Activated CD8-positive, alpha-beta T cell treated with anti-CD3 and anti-CD28 coated beads, Interleukin-2, amount 10 ng/mL, durations not matched to agents 7 days and 5 days (primary cell): ENCODE measurements at regions of chr1 and their contacts with region 1.

Region 1: GRCh38 chr1:46247436-46248121 is at the start of gene RAD54L:
- DNase-seq: peak; percentile 98
- ATAC-seq: peak; percentile 93
- H3K4me3 Mint-ChIP-seq: peak within 1 kb of the TSS; percentile 93
- H3K27ac Mint-ChIP-seq: peak within 1 kb of the TSS; percentile 98
- H3K4me1 Mint-ChIP-seq: peaks cover 45% of the 10 kb centered on the region
- H3K27me3 Mint-ChIP-seq: peaks cover 2% of the 10 kb centered on the region
- total RNA-seq, gene RAD54L: 59.3 to 63.9 TPM

Region 2: GRCh38 chr1:46188295-46189030 is 59.1 kb before region 1 on chr1:
- CTCF ChIA-PET with region 1: no interaction called
- POLR2A ChIA-PET with region 1: no interaction called
- DNase-seq: no peak
- ATAC-seq: no peak
- H3K4me3 Mint-ChIP-seq: no peak overlapping the region
- H3K27ac Mint-ChIP-seq: peak overlapping the region; percentile 3
- H3K4me1 Mint-ChIP-seq: peaks cover 14% of the 10 kb centered on the region
- H3K27me3 Mint-ChIP-seq: no peaks in the 10 kb centered on the region

Region 3: DNA sequence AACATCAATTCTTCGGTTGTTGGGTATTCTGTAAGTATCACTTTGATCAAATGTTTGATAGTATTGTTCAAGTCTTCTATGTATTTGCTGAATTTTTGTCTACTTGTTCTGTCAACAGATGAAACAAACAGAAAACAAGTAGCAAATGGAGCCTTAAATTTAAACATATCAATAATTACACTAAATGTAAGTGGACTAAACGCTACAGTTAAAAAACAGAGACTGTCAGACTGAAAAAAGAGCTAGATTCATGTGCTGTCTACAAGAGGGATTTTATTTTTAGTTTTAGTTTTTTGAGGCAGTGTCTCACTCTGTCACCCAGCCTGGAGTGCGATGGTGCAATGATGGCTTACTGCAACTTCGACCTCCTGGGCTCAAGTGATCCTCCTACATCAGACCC is 10.7 kb before region 1 on chr1:
- CTCF ChIA-PET with region 1: interaction called, 19 read pairs
- POLR2A ChIA-PET with region 1: no interaction called
- DNase-seq: no peak
- ATAC-seq: no peak
- H3K4me3 Mint-ChIP-seq: no peak overlapping the region
- H3K27ac Mint-ChIP-seq: no peak overlapping the region
- H3K4me1 Mint-ChIP-seq: peaks cover 4% of the 10 kb centered on the region
- H3K27me3 Mint-ChIP-seq: no peaks in the 10 kb centered on the region

Region 4: GRCh38 chr1:46303038-46303871 is 55.7 kb after region 1 on chr1 and contains the starts of genes LRRC41 and UQCRH:
- CTCF ChIA-PET with region 1: interaction called, 15 read pairs
- POLR2A ChIA-PET with region 1: interaction called, 21 read pairs
- DNase-seq: peak; percentile 94
- ATAC-seq: peak; percentile 84
- H3K4me3 Mint-ChIP-seq: peak within 1 kb of the TSS; percentile 94
- H3K27ac Mint-ChIP-seq: peak within 1 kb of the TSS; percentile 99
- H3K4me1 Mint-ChIP-seq: peaks cover 47% of the 10 kb centered on the region
- H3K27me3 Mint-ChIP-seq: no peaks in the 10 kb centered on the region
- total RNA-seq, gene LRRC41: 32.6 to 33.9 TPM
- total RNA-seq, gene UQCRH: 333 to 343 TPM

Region 5: DNA sequence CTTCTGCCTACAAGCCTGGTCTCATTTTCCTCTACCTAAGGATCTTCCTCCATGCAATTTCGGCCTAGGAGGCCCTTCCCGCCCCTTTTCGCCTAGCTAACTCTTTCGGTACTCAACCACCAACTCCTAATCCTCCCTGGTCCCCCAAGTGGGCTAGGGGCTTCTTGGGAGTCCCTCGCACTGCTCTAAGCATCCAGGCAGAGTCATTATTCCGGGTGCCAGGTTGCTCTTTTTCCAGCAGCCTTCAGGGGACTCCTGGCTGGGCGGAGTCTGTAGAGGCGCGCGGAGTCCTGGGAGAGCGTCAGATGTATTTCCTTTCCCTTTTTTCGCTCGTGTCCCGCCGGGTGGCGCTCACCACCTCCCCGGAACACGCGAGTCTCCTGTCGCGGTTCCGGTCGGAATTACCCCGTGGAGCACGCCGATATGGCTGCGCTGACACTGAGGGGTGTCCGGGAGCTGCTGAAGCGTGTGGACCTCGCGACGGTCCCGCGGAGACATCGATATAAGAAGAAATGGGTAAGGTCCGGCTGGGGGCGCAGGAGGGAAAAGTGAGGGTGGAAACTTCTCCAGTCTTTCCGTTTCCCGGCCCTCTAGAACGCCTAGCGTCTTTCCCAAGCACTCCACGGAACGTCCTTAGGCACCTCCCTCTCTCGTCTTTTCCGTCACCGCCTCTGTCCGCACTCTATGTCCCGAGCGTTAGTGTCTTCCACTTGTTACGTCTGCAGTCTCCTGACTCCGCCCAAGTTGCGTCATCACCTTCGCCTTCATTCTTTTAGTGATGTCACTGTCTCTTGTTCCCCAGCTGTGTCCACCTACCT is 93.0 kb after region 1 on chr1 and contains the start of gene NSUN4:
- CTCF ChIA-PET with region 1: interaction called, 20 read pairs
- POLR2A ChIA-PET with region 1: interaction called, 10 read pairs
- DNase-seq: peak; percentile 89
- ATAC-seq: peak; percentile 92
- H3K4me3 Mint-ChIP-seq: peak within 1 kb of the TSS; percentile 100
- H3K27ac Mint-ChIP-seq: peak within 1 kb of the TSS; percentile 100
- H3K4me1 Mint-ChIP-seq: peaks cover 34% of the 10 kb centered on the region
- H3K27me3 Mint-ChIP-seq: no peaks in the 10 kb centered on the region
- total RNA-seq, gene NSUN4: 22.3 to 22.5 TPM

Region 6: GRCh38 chr1:46442317-46443161 is 195.0 kb after region 1 on chr1:
- CTCF ChIA-PET with region 1: no interaction called
- POLR2A ChIA-PET with region 1: no interaction called
- DNase-seq: peak; percentile 77
- ATAC-seq: peak; percentile 79
- H3K4me3 Mint-ChIP-seq: peak overlapping the region; percentile 77
- H3K27ac Mint-ChIP-seq: peak overlapping the region; percentile 17
- H3K4me1 Mint-ChIP-seq: peaks cover 10% of the 10 kb centered on the region
- H3K27me3 Mint-ChIP-seq: peaks cover 26% of the 10 kb centered on the region